AG04449 (cell line): ENCODE measurements at regions of chr14 and their contacts with region 1.

Region 1: DNA sequence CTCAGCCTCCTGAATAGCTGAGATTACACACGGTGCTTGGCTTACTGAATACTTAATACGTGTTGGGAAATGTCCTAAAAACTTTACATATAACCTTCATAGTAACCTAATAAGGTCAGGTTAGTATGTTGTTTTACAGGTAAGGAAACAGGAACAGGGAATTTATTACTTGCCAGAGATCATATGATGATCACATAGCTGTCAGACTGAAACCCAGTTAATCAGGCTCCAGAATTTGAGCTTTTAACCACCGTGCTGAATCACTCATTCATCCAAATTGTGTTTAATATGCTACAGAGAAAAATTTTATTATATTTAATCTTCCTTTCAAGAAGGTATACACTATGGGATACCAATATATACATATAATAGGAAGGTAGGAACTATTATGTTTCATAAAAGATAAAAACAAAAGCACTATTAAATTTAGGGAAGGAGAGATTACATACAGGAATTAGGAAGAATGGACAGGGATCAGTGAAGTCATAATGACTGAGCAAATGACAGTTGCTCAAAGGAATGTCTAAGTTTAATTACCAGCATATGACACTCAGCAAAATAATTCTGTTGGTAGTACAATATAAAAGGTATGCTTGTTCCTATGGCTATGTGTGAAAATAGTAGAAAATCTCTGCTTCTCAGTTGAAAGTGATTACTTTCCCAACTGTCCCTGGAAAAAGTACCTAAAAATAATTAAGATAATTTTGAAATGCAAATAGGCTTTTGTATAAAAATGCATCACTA is 59.3 kb downstream of the HEATR5A start:
- DNase-seq: no peak
- H3K4me3 ChIP-seq: no peak overlapping the region
- CTCF ChIP-seq: no peak

Region 2: GRCh38 chr14:31346097-31346496 is 15.0 kb before region 1 on chr14:
- CTCF ChIA-PET with region 1: interaction called, 15 read pairs
- POLR2A ChIA-PET with region 1: no interaction called
- DNase-seq: no peak
- H3K4me3 ChIP-seq: no peak overlapping the region
- CTCF ChIP-seq: no peak